ENCODE measurements at regions of chr1 and their contacts with region 1.

Region 1: GRCh38 chr1:115052454-115053083 is 22.9 kb downstream of the TSHB start:
- DNase-seq: no peak
- H3K4me3 ChIP-seq: no peak overlapping the region
- H3K27me3 ChIP-seq: no peaks in the 10 kb centered on the region; the same call in 1 of the 2 replicates
- CTCF ChIP-seq: peak; percentile 89

Region 2: DNA sequence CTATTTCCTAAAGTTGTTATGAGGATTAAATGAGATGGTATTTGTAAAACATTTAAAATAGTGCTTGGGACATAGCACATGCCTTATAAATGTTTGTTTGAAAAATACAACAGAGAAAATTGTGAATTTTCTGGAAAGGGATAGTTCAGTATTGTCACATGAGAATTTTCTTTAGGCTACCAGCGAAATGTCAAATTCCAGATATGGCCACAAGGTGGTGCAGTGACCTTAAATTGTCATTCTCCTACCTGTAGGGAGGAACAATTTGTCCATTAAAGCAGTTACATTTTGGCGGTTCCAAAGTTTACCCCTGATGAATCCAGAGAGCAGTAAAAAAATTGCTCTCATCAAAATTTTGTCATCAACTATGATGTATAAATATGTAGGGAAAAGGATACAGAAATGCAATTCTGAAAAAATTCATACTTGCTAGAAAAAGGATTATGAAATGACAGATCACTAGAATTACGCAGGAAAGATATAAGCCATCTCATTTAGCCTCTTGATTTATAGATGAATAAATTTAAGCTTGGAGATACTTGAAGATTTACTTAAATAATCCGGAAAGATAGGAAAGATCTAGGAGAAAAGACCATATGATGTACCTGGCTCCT is 73.2 kb before region 1 on chr1:
- CTCF ChIA-PET with region 1: interaction called, 17 read pairs
- POLR2A ChIA-PET with region 1: no interaction called
- DNase-seq: no peak
- H3K4me3 ChIP-seq: no peak overlapping the region
- H3K27me3 ChIP-seq: peaks cover 3% of the 10 kb centered on the region; the same call in 1 of the 2 replicates
- CTCF ChIP-seq: peak; percentile 62

Region 3: GRCh38 chr1:115041654-115042053 is 10.9 kb before region 1 on chr1:
- CTCF ChIA-PET with region 1: interaction called, 30 read pairs
- POLR2A ChIA-PET with region 1: no interaction called
- DNase-seq: no peak
- H3K4me3 ChIP-seq: no peak overlapping the region
- H3K27me3 ChIP-seq: no peaks in the 10 kb centered on the region; the same call in 1 of the 2 replicates
- CTCF ChIP-seq: peak; percentile 23; the same call in 1 of the 2 replicates

Region 4: DNA sequence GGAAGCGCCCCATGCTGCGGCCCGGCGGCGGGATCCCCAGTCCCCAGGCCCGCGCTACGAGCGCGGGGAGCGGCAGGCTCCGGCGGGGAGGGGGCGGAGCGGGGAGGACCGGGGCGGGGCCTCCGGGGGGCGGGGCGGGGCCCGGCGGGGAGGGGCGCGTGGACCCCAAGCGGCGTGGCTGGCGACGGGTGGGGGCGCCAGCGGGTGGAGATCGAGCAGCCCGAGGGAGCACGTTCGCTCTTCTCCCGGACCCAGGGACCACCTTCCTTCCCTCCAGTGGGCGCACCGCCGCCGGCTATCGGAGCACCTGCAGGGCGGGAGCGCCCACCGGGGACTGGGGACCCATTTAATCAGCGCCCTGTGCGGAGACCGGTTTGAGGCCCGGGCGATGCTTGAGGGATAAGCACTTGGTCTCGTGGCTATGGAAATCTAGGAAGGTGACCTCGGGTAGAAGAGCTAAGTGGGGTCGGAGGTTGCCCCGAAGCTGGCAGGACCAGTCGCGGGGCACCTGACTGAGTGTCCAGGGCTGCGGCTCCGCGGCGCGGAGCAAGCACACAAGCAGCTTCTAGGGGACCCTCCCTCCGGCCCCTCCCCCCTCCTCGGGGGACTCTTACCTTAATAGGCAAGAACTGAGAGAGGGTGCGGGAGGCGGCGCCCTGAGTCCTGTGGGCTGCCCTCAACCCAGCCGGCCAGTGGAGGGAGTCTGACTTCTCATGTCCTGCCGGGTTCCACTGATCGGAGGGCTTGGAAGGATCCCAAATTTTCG is 37.0 kb after region 1 on chr1 and contains the start of gene TSPAN2:
- CTCF ChIA-PET with region 1: interaction called, 12 read pairs
- POLR2A ChIA-PET with region 1: no interaction called
- DNase-seq: no peak
- H3K4me3 ChIP-seq: peak within 1 kb of the TSS; percentile 59
- H3K27me3 ChIP-seq: peaks cover 3% of the 10 kb centered on the region; the same call in 1 of the 2 replicates
- CTCF ChIP-seq: peak; percentile 53
- polyA plus RNA-seq, gene TSPAN2: 3.9 and 5.4 TPM in 2 replicates

Region 5: GRCh38 chr1:115123116-115123515 is 70.5 kb after region 1 on chr1:
- CTCF ChIA-PET with region 1: no interaction called
- POLR2A ChIA-PET with region 1: no interaction called
- DNase-seq: no peak
- H3K4me3 ChIP-seq: no peak overlapping the region
- H3K27me3 ChIP-seq: no peaks in the 10 kb centered on the region
- CTCF ChIP-seq: no peak

Region 6: DNA sequence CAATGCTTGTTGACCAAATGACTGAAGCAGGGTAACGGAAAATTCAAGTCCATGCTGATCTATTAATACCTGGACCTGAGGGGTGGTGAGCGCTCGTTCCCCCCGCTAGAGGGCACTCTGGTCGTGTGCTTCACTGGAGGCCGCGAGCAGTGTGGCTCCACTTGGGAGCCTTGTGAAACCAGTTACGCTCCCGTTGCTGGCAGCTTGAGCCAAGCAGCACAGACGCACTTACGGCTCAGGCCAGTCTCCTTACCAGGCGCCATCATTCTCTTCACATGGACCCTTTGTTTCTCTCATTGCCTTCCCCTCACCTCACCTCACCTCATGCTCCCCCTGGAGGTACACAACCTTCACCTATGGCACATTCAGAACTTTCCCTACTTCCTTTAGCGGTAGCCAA is 86.4 kb after region 1 on chr1:
- CTCF ChIA-PET with region 1: no interaction called
- POLR2A ChIA-PET with region 1: no interaction called
- DNase-seq: peak; percentile 51
- H3K4me3 ChIP-seq: no peak overlapping the region
- H3K27me3 ChIP-seq: no peaks in the 10 kb centered on the region
- CTCF ChIP-seq: peak; percentile 92